Dendritic cell treated with granulocyte-macrophage colony-stimulating factor and Interleukin-4, amounts not matched to agents 40 ng/mL and 50 ng/mL, for 4 days (primary cell): ENCODE measurements at regions of chr12 and their contacts with region 1.

Region 1: GRCh38 chr12:68610370-68611093 is at the start of gene RAP1B:
- H3K4me3 Mint-ChIP-seq: peak within 1 kb of the TSS; percentile 94
- H3K27ac Mint-ChIP-seq: peak within 1 kb of the TSS; percentile 95
- H3K4me1 Mint-ChIP-seq: peaks cover 47% of the 10 kb centered on the region
- H3K27me3 Mint-ChIP-seq: no peaks in the 10 kb centered on the region

Region 2: GRCh38 chr12:68331869-68332727 is 278.4 kb before region 1 on chr12 and contains the start of gene MDM1:
- intact Hi-C with region 1: loop called (anchors 2 kb)
- H3K4me3 Mint-ChIP-seq: peak within 1 kb of the TSS; percentile 85
- H3K27ac Mint-ChIP-seq: peak within 1 kb of the TSS; percentile 85
- H3K4me1 Mint-ChIP-seq: peaks cover 41% of the 10 kb centered on the region
- H3K27me3 Mint-ChIP-seq: no peaks in the 10 kb centered on the region

Region 3: GRCh38 chr12:68358532-68359485 is 251.7 kb before region 1 on chr12:
- intact Hi-C with region 1: loop called (anchors 5 kb)
- H3K4me3 Mint-ChIP-seq: no peak overlapping the region
- H3K27ac Mint-ChIP-seq: peak overlapping the region; percentile 60
- H3K4me1 Mint-ChIP-seq: peaks cover 38% of the 10 kb centered on the region
- H3K27me3 Mint-ChIP-seq: no peaks in the 10 kb centered on the region

Region 4: GRCh38 chr12:68559984-68560850 is 50.3 kb before region 1 on chr12:
- intact Hi-C with region 1: loop called (anchors 1 kb)
- H3K4me3 Mint-ChIP-seq: peak overlapping the region; percentile 53
- H3K27ac Mint-ChIP-seq: peak overlapping the region; percentile 96
- H3K4me1 Mint-ChIP-seq: peaks cover 34% of the 10 kb centered on the region
- H3K27me3 Mint-ChIP-seq: no peaks in the 10 kb centered on the region

Region 5: DNA sequence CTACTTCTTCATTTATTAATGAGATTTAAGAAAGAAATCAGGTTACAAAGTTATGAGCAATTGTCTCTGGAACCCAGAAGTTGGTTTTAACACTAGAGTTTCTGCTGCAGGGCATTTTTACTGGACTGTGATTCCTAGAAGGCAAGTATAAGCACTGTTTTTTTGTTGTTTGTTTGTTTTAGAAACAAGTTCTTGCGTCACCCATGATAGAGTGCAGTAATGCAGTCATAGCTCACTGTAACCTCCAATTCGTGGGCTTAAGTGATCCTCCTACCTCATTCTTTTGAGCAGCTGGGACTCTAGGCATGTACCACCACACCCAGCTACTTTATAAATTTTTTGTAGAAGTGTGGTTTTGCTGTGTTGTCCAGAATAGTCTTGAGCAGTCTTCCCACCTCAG is 25.7 kb after region 1 on chr12:
- intact Hi-C with region 1: no loop called
- H3K4me3 Mint-ChIP-seq: no peak overlapping the region
- H3K27ac Mint-ChIP-seq: no peak overlapping the region
- H3K4me1 Mint-ChIP-seq: peaks cover 52% of the 10 kb centered on the region
- H3K27me3 Mint-ChIP-seq: no peaks in the 10 kb centered on the region